Activated naive CD4-positive, alpha-beta T cell treated with anti-CD3 and anti-CD28 coated beads, Interleukin-2, amount 10 ng/mL, durations not matched to agents 7 days and 5 days (primary cell): ENCODE measurements at regions of chr7 and their contacts with region 1.

Region 1: GRCh38 chr7:116525913-116526861 is 1.4 kb downstream of the CAV1 start:
- DNase-seq: peak; percentile 73
- H3K4me3 Mint-ChIP-seq: peak overlapping the region; percentile 72
- H3K27ac Mint-ChIP-seq: no peak overlapping the region
- H3K4me1 Mint-ChIP-seq: peaks cover 27% of the 10 kb centered on the region
- H3K27me3 Mint-ChIP-seq: peaks cover 76% of the 10 kb centered on the region

Region 2: GRCh38 chr7:116138202-116138801 is 387.9 kb before region 1 on chr7:
- CTCF ChIA-PET with region 1: interaction called, 10 read pairs
- DNase-seq: peak; percentile 39
- H3K4me3 Mint-ChIP-seq: no peak overlapping the region
- H3K27ac Mint-ChIP-seq: no peak overlapping the region
- H3K4me1 Mint-ChIP-seq: peaks cover 22% of the 10 kb centered on the region
- H3K27me3 Mint-ChIP-seq: peaks cover 7% of the 10 kb centered on the region

Region 3: GRCh38 chr7:116258734-116259133 is 267.5 kb before region 1 on chr7:
- CTCF ChIA-PET with region 1: interaction called, 24 read pairs
- DNase-seq: peak; percentile 33
- H3K4me3 Mint-ChIP-seq: no peak overlapping the region
- H3K27ac Mint-ChIP-seq: no peak overlapping the region
- H3K4me1 Mint-ChIP-seq: peaks cover 10% of the 10 kb centered on the region
- H3K27me3 Mint-ChIP-seq: peaks cover 5% of the 10 kb centered on the region